ENCODE measurements at regions of chr10 and their contacts with region 1.

Region 1: DNA sequence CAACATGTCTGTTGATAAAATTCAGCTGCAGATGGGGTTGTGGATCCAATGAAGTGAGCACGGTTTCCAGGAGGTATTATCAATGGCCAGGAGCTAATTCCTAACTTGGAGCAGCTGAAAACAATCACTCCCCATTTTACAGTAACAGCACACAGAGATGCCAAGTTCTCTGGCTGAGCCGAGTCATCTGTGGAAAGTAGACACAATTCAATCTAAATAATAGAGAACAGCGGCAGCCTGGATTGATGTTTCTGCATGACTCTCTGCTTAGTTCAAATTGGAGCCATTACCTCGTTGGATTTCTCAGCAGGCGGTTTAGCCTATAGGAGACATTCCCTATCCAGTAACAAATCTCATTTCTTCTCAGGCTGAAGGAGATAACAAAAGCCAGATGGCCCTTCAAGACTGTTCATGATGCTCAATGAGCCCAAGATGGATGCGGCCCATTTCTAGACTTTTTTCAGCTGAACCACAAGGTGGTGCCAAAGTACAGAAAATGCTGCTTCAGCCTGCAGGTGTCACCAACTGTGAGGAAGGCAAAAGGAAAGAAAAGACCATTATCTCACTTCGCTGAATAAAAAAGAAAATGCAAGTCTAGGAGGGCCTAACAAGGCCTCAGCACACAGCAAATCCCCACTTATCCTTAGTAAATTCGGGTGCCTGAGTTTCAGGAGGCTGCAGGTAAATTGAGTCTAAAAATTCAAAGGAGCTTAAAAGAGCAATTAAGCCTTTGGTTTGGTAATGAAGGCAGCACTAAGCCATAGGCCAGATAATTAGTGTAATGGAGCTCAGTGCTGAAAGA is 83.7 kb downstream of the SLC16A9 start:
- DNase-seq: peak; percentile 95
- ATAC-seq: peak; percentile 82
- H3K4me3 ChIP-seq: peak overlapping the region; percentile 8; the same call in 1 of the 2 replicates
- H3K27ac ChIP-seq: no peak overlapping the region
- H3K4me1 ChIP-seq: peaks cover 35% of the 10 kb centered on the region
- H3K27me3 ChIP-seq: no peaks in the 10 kb centered on the region
- CTCF ChIP-seq: peak; percentile 99

Region 2: GRCh38 chr10:58952747-58953466 is 673.0 kb before region 1 on chr10:
- CTCF ChIA-PET with region 1: interaction called, 3 read pairs
- POLR2A ChIA-PET with region 1: no interaction called
- intact Hi-C with region 1: loop called (anchors 1 kb)
- DNase-seq: peak; percentile 78
- ATAC-seq: peak; percentile 56
- H3K4me3 ChIP-seq: no peak overlapping the region
- H3K27ac ChIP-seq: no peak overlapping the region
- H3K4me1 ChIP-seq: peaks cover 25% of the 10 kb centered on the region
- H3K27me3 ChIP-seq: no peaks in the 10 kb centered on the region
- CTCF ChIP-seq: peak; percentile 91

Region 3: DNA sequence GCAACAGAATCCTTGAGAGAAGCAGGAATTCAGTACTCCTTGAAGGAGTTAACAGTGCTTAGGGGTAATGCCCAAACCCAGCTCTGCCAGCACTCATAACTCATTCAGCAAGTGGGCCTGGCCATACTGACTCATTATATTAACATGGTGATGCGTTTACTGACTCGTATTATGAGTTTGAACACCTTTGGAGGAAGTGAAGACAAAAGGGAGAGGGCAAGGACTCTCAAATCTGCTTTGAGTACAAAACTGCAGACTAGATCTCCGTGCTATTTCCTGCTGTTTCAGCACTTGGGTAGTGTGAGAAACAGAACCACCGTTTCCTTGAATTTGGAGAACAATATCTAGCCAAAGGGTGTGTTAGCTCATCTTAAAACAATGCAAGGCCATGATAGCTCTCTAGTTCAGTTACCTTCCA is 53.0 kb after region 1 on chr10:
- CTCF ChIA-PET with region 1: no interaction called
- POLR2A ChIA-PET with region 1: no interaction called
- intact Hi-C with region 1: loop called (anchors 2 kb)
- DNase-seq: peak; percentile 95
- ATAC-seq: peak; percentile 72
- H3K4me3 ChIP-seq: no peak overlapping the region
- H3K27ac ChIP-seq: peak overlapping the region; percentile 77
- H3K4me1 ChIP-seq: peaks cover 54% of the 10 kb centered on the region
- H3K27me3 ChIP-seq: no peaks in the 10 kb centered on the region
- CTCF ChIP-seq: no peak

Region 4: GRCh38 chr10:59709395-59710125 is 83.6 kb after region 1 on chr10 and contains the start of gene SLC16A9:
- CTCF ChIA-PET with region 1: interaction called, 3 read pairs
- POLR2A ChIA-PET with region 1: no interaction called
- intact Hi-C with region 1: loop called (anchors 1 kb)
- DNase-seq: peak; percentile 83
- ATAC-seq: peak; percentile 82
- H3K4me3 ChIP-seq: peak within 1 kb of the TSS; percentile 85
- H3K27ac ChIP-seq: peak within 1 kb of the TSS; percentile 43
- H3K4me1 ChIP-seq: peaks cover 27% of the 10 kb centered on the region
- H3K27me3 ChIP-seq: no peaks in the 10 kb centered on the region
- CTCF ChIP-seq: peak; percentile 60
- total RNA-seq, gene SLC16A9: 12.8 and 17.4 TPM in 2 replicates

Region 5: GRCh38 chr10:59735296-59735695 is 109.4 kb after region 1 on chr10:
- CTCF ChIA-PET with region 1: no interaction called
- POLR2A ChIA-PET with region 1: no interaction called
- intact Hi-C with region 1: no loop called
- DNase-seq: no peak
- ATAC-seq: no peak
- H3K4me3 ChIP-seq: no peak overlapping the region
- H3K27ac ChIP-seq: no peak overlapping the region
- H3K4me1 ChIP-seq: peaks cover 25% of the 10 kb centered on the region
- H3K27me3 ChIP-seq: no peaks in the 10 kb centered on the region
- CTCF ChIP-seq: no peak

Region 6: DNA sequence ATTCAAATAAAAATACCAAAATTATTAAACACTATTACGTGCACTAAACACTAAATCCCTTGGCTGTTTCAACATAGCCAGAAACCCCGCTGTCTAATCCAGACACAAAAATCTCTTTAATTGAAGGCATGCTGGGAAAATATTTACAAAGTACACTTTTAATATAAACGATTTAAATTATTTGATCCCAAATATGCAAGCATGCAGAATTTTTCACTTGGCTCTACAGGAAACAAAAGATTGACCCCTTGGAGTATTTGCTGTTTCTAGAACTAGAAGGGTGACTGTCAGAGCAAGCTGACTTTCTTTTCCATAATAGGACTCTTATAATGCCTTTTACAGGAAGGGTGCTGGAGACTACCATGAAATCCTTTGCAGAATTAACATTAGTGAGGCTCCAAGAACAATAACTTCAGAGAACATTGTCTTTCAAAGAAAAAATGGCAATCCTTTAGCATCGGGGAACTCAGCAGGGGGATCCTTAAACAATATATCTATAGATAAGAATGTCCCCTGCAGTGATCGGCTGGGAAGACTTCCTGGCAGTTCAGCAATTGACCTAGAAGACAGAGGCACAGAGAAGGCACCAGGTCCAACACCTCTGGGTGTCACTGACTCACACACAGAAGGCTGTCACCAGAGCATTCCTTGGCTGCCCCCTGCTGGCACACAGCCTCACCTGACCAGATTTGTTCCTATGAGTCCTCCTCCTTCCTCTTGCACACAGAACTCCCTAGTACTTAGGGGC is 183.1 kb after region 1 on chr10:
- CTCF ChIA-PET with region 1: interaction called, 4 read pairs
- POLR2A ChIA-PET with region 1: no interaction called
- intact Hi-C with region 1: loop called (anchors 1 kb)
- DNase-seq: peak; percentile 93
- ATAC-seq: peak; percentile 96
- H3K4me3 ChIP-seq: no peak overlapping the region
- H3K27ac ChIP-seq: no peak overlapping the region
- H3K4me1 ChIP-seq: no peaks in the 10 kb centered on the region
- H3K27me3 ChIP-seq: no peaks in the 10 kb centered on the region
- CTCF ChIP-seq: peak; percentile 99

Region 7: GRCh38 chr10:60032723-60033122 is 406.8 kb after region 1 on chr10:
- CTCF ChIA-PET with region 1: no interaction called
- POLR2A ChIA-PET with region 1: no interaction called
- intact Hi-C with region 1: loop called (anchors 1 kb)
- DNase-seq: peak; percentile 96
- ATAC-seq: peak; percentile 89
- H3K4me3 ChIP-seq: no peak overlapping the region
- H3K27ac ChIP-seq: no peak overlapping the region
- H3K4me1 ChIP-seq: peaks cover 5% of the 10 kb centered on the region; the same call in 1 of the 2 replicates
- H3K27me3 ChIP-seq: no peaks in the 10 kb centered on the region
- CTCF ChIP-seq: peak; percentile 100